Activated naive CD4-positive, alpha-beta T cell treated with anti-CD3 and anti-CD28 coated beads for 36 hours (primary cell): ENCODE measurements at regions of chr13 and their contacts with region 1.

Region 1: DNA sequence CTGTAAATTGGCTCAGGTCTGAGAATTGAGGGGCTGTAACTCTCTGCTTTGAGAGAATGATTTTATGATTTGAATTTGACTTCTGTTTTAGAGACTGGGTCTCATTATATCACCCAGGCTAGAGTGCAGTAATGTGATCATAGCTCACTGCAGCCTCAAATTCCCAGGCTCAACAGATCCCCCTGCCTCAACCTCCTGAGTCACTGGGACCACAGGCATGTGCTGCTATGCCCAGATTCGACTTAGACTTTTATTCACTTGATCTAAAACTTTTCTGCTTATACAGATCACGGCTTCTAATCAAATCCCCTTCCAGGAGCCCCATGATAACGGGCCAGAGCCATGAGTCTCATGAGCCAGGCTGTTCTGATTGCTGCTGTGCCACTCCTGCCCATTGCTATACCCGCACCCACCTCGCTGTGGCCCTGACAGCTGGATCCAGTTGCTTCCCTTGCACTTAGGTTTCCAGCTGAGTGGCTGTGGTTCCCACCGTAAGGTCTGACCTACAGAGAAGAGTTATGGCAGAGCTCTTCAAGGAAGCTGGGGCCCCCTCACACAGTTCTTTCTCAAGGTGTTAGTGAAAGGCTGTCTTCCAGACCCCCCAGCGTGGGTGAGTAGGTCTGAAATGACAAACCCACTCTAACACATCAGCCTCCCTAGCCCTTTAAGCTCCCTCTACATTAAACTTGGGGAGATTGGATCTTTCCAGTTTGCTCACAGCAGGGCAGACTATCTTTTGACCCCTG is 251.2 kb upstream of the SGCG start:
- DNase-seq: no peak
- H3K4me3 Mint-ChIP-seq: no peak overlapping the region
- H3K27ac Mint-ChIP-seq: no peak overlapping the region
- H3K4me1 Mint-ChIP-seq: peaks cover 9% of the 10 kb centered on the region
- H3K27me3 Mint-ChIP-seq: peaks cover 39% of the 10 kb centered on the region

Region 2: GRCh38 chr13:22979092-22979491 is 49.5 kb after region 1 on chr13:
- CTCF ChIA-PET with region 1: no interaction called
- intact Hi-C with region 1: no loop called
- DNase-seq: no peak
- H3K4me3 Mint-ChIP-seq: no peak overlapping the region
- H3K27ac Mint-ChIP-seq: no peak overlapping the region
- H3K4me1 Mint-ChIP-seq: no peaks in the 10 kb centered on the region
- H3K27me3 Mint-ChIP-seq: no peaks in the 10 kb centered on the region

Region 3: GRCh38 chr13:24355103-24355502 is 1425.5 kb after region 1 on chr13:
- CTCF ChIA-PET with region 1: no interaction called
- intact Hi-C with region 1: loop called (anchors 10 kb)
- DNase-seq: no peak
- H3K4me3 Mint-ChIP-seq: no peak overlapping the region
- H3K27ac Mint-ChIP-seq: no peak overlapping the region
- H3K4me1 Mint-ChIP-seq: no peaks in the 10 kb centered on the region
- H3K27me3 Mint-ChIP-seq: no peaks in the 10 kb centered on the region